Mammary epithelial cell (primary cell): ENCODE measurements at regions of chr9 and their contacts with region 1.

Region 1: GRCh38 chr9:18238254-18238653 is 235.7 kb upstream of the ADAMTSL1 start:
- DNase-seq: peak; percentile 78
- H3K4me3 ChIP-seq: no peak overlapping the region
- H3K27ac ChIP-seq: peak overlapping the region; percentile 89
- H3K4me1 ChIP-seq: peaks cover 26% of the 10 kb centered on the region
- H3K27me3 ChIP-seq: no peaks in the 10 kb centered on the region
- CTCF ChIP-seq: no peak

Region 2: GRCh38 chr9:18588002-18588401 is 349.7 kb after region 1 on chr9:
- CTCF ChIA-PET with region 1: no interaction called
- dilution Hi-C with region 1: no loop called
- in situ Hi-C with region 1: no loop called
- intact Hi-C with region 1: no loop called
- DNase-seq: no peak
- H3K4me3 ChIP-seq: no peak overlapping the region
- H3K27ac ChIP-seq: no peak overlapping the region
- H3K4me1 ChIP-seq: no peaks in the 10 kb centered on the region
- H3K27me3 ChIP-seq: no peaks in the 10 kb centered on the region
- CTCF ChIP-seq: no peak

Region 3: GRCh38 chr9:18658764-18659705 is 420.8 kb after region 1 on chr9:
- CTCF ChIA-PET with region 1: no interaction called
- dilution Hi-C with region 1: no loop called
- in situ Hi-C with region 1: loop called in 1 of 2 experiments (anchors 25 kb)
- intact Hi-C with region 1: no loop called
- DNase-seq: peak; percentile 42
- H3K4me3 ChIP-seq: no peak overlapping the region
- H3K27ac ChIP-seq: no peak overlapping the region
- H3K4me1 ChIP-seq: peaks cover 5% of the 10 kb centered on the region
- H3K27me3 ChIP-seq: no peaks in the 10 kb centered on the region
- CTCF ChIP-seq: no peak

Region 4: DNA sequence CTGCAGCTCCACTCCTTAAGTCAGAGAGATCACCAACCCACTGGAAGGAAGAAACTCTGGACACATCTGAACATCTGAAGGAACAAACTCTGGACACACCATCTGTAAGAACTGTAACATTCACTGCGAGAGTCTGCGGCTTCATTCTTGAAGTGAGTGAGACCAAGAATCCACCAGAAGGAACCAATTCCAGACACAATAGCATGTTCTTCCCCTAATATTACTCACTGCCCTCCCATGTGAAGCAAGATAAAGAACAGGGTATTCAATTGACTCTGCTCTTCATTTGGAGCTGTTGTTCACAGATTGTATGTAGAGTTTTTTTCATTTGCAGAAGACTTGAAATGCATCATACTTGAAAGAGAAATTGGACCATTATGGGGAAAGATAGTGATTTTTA is 784.0 kb after region 1 on chr9:
- CTCF ChIA-PET with region 1: no interaction called
- dilution Hi-C with region 1: no loop called
- in situ Hi-C with region 1: loop called in 1 of 2 experiments (anchors 25 kb)
- intact Hi-C with region 1: no loop called
- DNase-seq: no peak
- H3K4me3 ChIP-seq: no peak overlapping the region
- H3K27ac ChIP-seq: no peak overlapping the region
- H3K4me1 ChIP-seq: no peaks in the 10 kb centered on the region
- H3K27me3 ChIP-seq: no peaks in the 10 kb centered on the region
- CTCF ChIP-seq: no peak